Psoas muscle (tissue), 8 donors: ENCODE measurements at regions of chr13 and their contacts with region 1.

Region 1: GRCh38 chr13:41193919-41194824 is at the start of gene KBTBD7:
- DNase-seq: peak; percentile 98
- ATAC-seq: peak; percentile 97 to 99 (median 98)
- H3K4me3 ChIP-seq: peak within 1 kb of the TSS; percentile 93
- H3K27ac ChIP-seq: peak within 1 kb of the TSS; percentile 87
- H3K4me1 ChIP-seq: peaks cover 19% of the 10 kb centered on the region
- H3K27me3 ChIP-seq: no peaks in the 10 kb centered on the region
- CTCF ChIP-seq: no peak
- total RNA-seq, gene KBTBD7: 2.1 to 5.3 (median 3.8) TPM

Region 2: GRCh38 chr13:40464337-40465014 is 729.7 kb before region 1 on chr13:
- intact Hi-C with region 1: no loop called
- DNase-seq: no peak
- ATAC-seq: no peak
- H3K4me3 ChIP-seq: no peak overlapping the region
- H3K27ac ChIP-seq: no peak overlapping the region
- H3K4me1 ChIP-seq: no peaks in the 10 kb centered on the region
- H3K27me3 ChIP-seq: no peaks in the 10 kb centered on the region
- CTCF ChIP-seq: no peak

Region 3: DNA sequence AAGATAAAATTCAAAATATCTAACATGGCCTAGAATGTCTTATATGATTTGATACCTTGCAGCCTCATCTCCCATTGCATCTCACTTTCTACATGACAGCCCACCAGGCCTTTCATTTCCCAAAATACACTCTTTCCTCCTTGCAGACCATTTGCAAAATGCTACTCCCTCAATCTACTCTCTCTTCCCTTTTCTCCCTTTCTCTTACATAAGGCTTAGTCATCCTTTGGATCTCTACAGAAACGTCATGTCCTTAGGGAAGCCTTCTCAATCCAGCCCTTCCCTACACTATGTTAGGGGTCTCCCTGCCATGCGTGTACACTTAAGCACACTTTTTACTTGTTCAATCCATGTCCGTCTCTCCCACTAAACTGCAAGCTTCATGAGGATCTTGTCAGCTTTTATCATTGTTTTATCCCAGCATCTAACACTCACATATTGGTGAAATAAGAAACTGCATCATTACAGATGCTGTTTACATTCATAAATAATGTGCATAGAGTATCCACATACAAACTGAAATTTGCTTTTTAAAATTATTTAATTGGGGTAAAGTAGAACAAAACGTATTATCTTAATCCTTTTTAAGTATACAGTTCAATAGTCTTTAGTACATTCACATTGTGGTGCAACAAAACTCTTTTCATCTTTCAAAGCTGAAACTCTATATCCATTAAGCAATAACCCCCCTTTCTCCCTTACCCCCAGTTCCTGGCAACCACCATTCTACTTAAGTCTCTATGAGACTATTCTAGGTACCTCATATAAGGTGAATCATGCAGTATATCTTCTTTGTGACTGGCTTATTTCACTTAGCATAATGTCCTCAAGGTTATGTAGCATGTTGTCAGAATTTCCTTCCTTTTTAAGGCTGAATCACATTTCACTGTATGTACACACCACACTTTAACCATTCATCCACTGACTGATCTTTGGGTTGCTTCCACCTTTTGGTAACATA is 144.4 kb before region 1 on chr13:
- intact Hi-C with region 1: no loop called
- DNase-seq: no peak
- ATAC-seq: peak; percentile 48 to 88 (median 86)
- H3K4me3 ChIP-seq: no peak overlapping the region
- H3K27ac ChIP-seq: no peak overlapping the region
- H3K4me1 ChIP-seq: peaks cover 53% of the 10 kb centered on the region
- H3K27me3 ChIP-seq: no peaks in the 10 kb centered on the region
- CTCF ChIP-seq: no peak

Region 4: GRCh38 chr13:41061075-41061913 is 132.9 kb before region 1 on chr13 and contains the start of gene WBP4:
- intact Hi-C with region 1: loop called in 1 of 2 experiments (anchors 5 kb)
- DNase-seq: peak; percentile 95 to 97
- ATAC-seq: peak; percentile 81 to 85 (median 84)
- H3K4me3 ChIP-seq: peak within 1 kb of the TSS; percentile 88
- H3K27ac ChIP-seq: peak within 1 kb of the TSS; percentile 98
- H3K4me1 ChIP-seq: peaks cover 64% of the 10 kb centered on the region
- H3K27me3 ChIP-seq: no peaks in the 10 kb centered on the region
- CTCF ChIP-seq: no peak
- total RNA-seq, gene WBP4: 18.8 to 24.9 (median 21.6) TPM

Region 5: GRCh38 chr13:41132512-41133152 is 61.5 kb before region 1 on chr13 and contains the start of gene KBTBD6:
- intact Hi-C with region 1: loop called (anchors 1 to 5 kb)
- DNase-seq: peak; percentile 98
- ATAC-seq: peak; percentile 98 to 99 (median 98)
- H3K4me3 ChIP-seq: peak within 1 kb of the TSS; percentile 85
- H3K27ac ChIP-seq: peak within 1 kb of the TSS; percentile 90
- H3K4me1 ChIP-seq: peaks cover 30% of the 10 kb centered on the region
- H3K27me3 ChIP-seq: no peaks in the 10 kb centered on the region
- CTCF ChIP-seq: no peak
- total RNA-seq, gene KBTBD6: 2.4 to 6.0 (median 5.6) TPM

Region 6: DNA sequence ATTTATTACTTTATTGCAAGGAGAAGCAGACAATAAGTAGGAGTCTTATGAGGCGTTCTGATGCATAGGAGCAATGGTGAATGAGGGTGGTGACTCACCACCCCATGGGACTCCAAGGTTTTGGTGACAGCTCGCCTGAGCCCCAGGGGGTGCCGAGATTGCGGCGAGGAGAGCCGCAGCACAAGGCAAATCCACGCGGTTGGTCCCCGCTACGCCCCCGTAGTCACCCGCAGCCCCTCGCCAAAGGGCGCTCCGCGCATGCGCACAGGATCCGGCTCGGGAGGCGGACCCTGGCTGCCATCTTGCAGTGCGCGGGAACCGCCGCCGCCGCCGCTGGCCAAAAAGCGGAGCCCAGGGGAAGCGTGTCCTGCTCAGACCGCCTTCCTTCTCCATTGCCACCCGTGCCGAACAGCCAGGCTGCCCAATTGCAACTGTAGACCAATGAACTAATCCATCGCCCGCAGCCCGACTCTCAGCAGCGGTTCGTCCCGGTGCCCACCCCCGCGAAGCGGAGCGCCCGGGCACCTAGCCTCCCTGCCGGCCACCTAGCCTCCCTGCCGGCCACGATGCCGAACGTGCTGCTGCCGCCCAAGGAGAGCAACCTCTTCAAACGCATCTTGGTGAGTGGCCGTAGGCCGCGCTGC is 116.9 kb after region 1 on chr13 and contains the start of gene NAA16:
- intact Hi-C with region 1: loop called in 1 of 2 experiments (anchors 5 kb)
- DNase-seq: peak; percentile 94 to 97
- ATAC-seq: peak; percentile 93 to 97 (median 94)
- H3K4me3 ChIP-seq: peak within 1 kb of the TSS; percentile 98
- H3K27ac ChIP-seq: peak within 1 kb of the TSS; percentile 94
- H3K4me1 ChIP-seq: peaks cover 32% of the 10 kb centered on the region
- H3K27me3 ChIP-seq: no peaks in the 10 kb centered on the region
- CTCF ChIP-seq: peak; percentile 5
- total RNA-seq, gene NAA16: 6.8 to 22.3 (median 8.3) TPM